ENCODE measurements at regions of chrX and their contacts with region 1.

Region 1: GRCh38 chrX:102835504-102836146 is 101.4 kb upstream of the RAB40AL start:
- DNase-seq: no peak
- ATAC-seq: no peak

Region 2: DNA sequence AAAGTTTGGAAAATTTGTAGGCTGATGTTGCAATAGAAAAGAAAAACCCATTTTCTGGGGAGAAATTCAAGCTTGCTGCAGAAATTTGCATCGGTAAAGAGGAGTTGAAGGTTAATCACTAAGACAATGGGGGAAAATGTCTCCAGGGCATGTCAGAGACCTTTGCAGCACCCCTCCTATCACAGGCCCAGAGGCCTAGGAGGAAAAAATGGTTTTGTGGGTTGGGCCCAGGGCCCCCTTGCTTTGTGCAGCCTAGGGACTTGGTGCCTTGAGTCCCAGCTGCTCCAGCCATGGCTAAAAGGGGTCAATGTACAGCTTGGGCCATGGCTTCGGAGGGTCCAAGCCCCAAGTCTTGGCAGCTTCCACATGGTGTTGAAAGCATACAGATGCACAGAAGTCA is 336.9 kb before region 1 on chrX:
- intact Hi-C with region 1: loop called in 1 of 2 experiments (anchors 10 kb)
- DNase-seq: no peak
- ATAC-seq: no peak

Region 3: GRCh38 chrX:102883176-102883915 is 47.7 kb after region 1 on chrX:
- intact Hi-C with region 1: loop called in 1 of 2 experiments (anchors 10 kb)
- DNase-seq: no peak
- ATAC-seq: no peak